ENCODE measurements at regions of chr13 and their contacts with region 1.

Region 1: GRCh38 chr13:25574437-25575411 is 202.9 kb downstream of the ATP8A2 start:
- DNase-seq: peak; percentile 76
- H3K4me3 ChIP-seq: no peak overlapping the region
- H3K27ac ChIP-seq: no peak overlapping the region
- H3K4me1 ChIP-seq: no peaks in the 10 kb centered on the region
- H3K27me3 ChIP-seq: no peaks in the 10 kb centered on the region
- CTCF ChIP-seq: peak; percentile 96

Region 2: DNA sequence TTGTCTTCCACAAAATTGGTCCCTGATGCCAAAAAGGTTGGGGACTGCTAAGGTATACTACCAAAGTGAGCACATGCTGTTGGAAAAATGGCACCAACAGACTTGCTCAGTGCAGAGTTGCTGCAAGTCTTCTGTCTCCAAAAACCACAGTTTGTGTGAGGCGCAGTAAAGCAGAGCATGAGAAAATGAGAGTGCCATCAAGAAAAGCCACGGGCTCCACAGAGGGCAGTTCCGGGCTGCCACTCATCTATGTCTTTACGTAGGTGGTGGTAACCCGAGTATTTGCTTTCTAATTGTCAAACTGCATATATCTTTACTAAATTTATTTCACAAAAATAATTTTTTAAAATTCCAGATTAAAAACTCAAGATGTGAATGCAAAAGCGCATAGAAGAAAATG is 687.0 kb before region 1 on chr13:
- CTCF ChIA-PET with region 1: no interaction called
- dilution Hi-C with region 1: no loop called
- in situ Hi-C with region 1: no loop called
- intact Hi-C with region 1: no loop called
- DNase-seq: no peak
- H3K4me3 ChIP-seq: no peak overlapping the region
- H3K27ac ChIP-seq: no peak overlapping the region
- H3K4me1 ChIP-seq: no peaks in the 10 kb centered on the region
- H3K27me3 ChIP-seq: no peaks in the 10 kb centered on the region
- CTCF ChIP-seq: no peak

Region 3: DNA sequence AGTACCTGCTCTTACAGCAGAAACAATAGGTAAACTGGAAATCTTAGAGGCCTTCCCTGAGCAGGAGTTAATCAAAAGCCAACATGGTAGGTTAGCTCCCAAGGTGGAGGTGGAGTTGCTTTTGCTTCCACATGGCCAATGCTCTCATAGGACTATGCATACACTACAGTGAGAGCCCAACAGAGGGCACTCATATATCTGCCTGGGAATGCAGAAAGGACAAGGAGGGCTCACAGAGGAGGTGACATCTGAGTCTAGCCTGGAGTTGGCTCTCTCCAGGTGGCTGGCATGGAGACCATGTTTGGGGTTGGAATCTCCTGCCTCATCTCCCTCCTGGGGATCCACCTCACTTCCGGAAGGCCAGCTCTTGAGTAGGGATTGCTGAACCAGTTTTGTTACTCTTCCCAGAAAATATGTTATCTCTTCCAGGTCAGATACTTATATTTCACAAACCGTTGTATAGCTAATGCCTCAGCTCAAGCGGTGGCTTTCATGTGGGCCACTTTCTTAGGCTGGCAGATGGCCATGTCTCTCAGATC is 168.3 kb before region 1 on chr13:
- CTCF ChIA-PET with region 1: no interaction called
- dilution Hi-C with region 1: no loop called
- in situ Hi-C with region 1: no loop called
- intact Hi-C with region 1: loop called (anchors 2 kb)
- DNase-seq: peak; percentile 8
- H3K4me3 ChIP-seq: no peak overlapping the region
- H3K27ac ChIP-seq: no peak overlapping the region
- H3K4me1 ChIP-seq: no peaks in the 10 kb centered on the region
- H3K27me3 ChIP-seq: no peaks in the 10 kb centered on the region
- CTCF ChIP-seq: peak; percentile 17 to 44

Region 4: DNA sequence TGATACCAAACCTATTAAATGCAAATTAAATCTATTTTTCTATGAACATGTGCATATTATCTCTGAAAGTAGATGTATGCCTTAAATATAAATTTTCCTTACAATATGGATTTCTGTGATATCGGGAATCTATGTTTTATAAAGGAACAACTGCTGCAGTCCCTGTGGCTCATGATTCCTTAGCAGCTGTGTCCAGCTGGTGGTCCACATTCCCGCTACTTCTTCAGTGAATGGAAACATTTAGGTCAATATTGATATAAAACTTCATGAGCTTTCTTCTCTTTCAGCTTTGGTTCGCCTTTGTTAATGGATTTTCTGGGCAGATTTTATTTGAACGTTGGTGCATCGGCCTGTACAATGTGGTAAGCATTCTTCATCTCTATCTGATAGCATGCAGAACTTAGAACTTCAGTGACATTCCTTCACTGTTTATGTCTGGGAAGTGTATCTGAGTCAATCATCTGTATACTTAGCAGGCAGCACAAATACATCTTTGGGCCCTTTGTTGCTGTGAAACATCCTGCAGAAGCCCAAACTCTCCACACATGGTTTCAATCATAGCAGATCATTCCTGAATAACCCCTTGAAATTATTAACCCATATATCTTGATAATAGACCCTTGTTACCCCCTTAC is 253.2 kb after region 1 on chr13:
- CTCF ChIA-PET with region 1: interaction called, 4 read pairs
- dilution Hi-C with region 1: no loop called
- in situ Hi-C with region 1: no loop called
- intact Hi-C with region 1: loop called (anchors 2 kb)
- DNase-seq: no peak
- H3K4me3 ChIP-seq: no peak overlapping the region
- H3K27ac ChIP-seq: no peak overlapping the region
- H3K4me1 ChIP-seq: no peaks in the 10 kb centered on the region
- H3K27me3 ChIP-seq: no peaks in the 10 kb centered on the region
- CTCF ChIP-seq: no peak

Region 5: GRCh38 chr13:25906191-25906661 is 331.5 kb after region 1 on chr13:
- CTCF ChIA-PET with region 1: no interaction called
- dilution Hi-C with region 1: no loop called
- in situ Hi-C with region 1: no loop called
- intact Hi-C with region 1: no loop called
- DNase-seq: no peak
- H3K4me3 ChIP-seq: no peak overlapping the region
- H3K27ac ChIP-seq: no peak overlapping the region
- H3K4me1 ChIP-seq: peaks cover 13% of the 10 kb centered on the region
- H3K27me3 ChIP-seq: no peaks in the 10 kb centered on the region
- CTCF ChIP-seq: no peak

Region 6: GRCh38 chr13:26062844-26063444 is 488.2 kb after region 1 on chr13:
- CTCF ChIA-PET with region 1: interaction called, 5 read pairs
- dilution Hi-C with region 1: no loop called
- in situ Hi-C with region 1: loop called (anchors 5 kb)
- intact Hi-C with region 1: loop called (anchors 1 kb)
- DNase-seq: peak; percentile 53
- H3K4me3 ChIP-seq: no peak overlapping the region
- H3K27ac ChIP-seq: no peak overlapping the region
- H3K4me1 ChIP-seq: no peaks in the 10 kb centered on the region
- H3K27me3 ChIP-seq: peaks cover 1% of the 10 kb centered on the region
- CTCF ChIP-seq: peak; percentile 85

Region 7: GRCh38 chr13:26074706-26075105 is 500.0 kb after region 1 on chr13:
- CTCF ChIA-PET with region 1: interaction called, 5 read pairs
- dilution Hi-C with region 1: no loop called
- in situ Hi-C with region 1: loop called in 1 of 2 experiments (anchors 5 kb)
- intact Hi-C with region 1: loop called (anchors 1 kb)
- DNase-seq: peak; percentile 31
- H3K4me3 ChIP-seq: peak overlapping the region in 2 of 3 experiments; percentile 15 to 21
- H3K27ac ChIP-seq: no peak overlapping the region
- H3K4me1 ChIP-seq: peaks cover 13% of the 10 kb centered on the region
- H3K27me3 ChIP-seq: no peaks in the 10 kb centered on the region
- CTCF ChIP-seq: peak in 1 of 2 donors; percentile 29

Region 8: DNA sequence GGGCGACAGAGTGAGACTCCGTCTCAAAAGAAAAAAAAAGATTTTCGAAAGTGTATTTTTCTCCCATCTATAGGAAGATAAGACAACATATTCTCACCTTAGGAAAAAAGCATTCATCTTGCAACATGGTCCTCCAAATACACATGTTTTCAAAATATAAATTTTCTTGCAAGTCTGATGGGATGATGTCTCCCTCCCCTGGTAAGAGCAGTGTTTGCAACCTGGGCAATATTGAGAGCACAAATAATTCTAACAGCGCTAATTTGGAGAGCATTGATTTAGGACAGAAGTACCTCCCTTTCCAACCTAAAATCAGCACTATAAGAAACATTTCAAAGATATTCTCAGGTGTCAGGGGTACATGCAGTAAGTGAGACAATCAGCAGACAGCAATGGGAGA is 538.1 kb after region 1 on chr13:
- CTCF ChIA-PET with region 1: no interaction called
- dilution Hi-C with region 1: no loop called
- in situ Hi-C with region 1: no loop called
- intact Hi-C with region 1: loop called (anchors 1 kb)
- DNase-seq: peak; percentile 1
- H3K4me3 ChIP-seq: no peak overlapping the region
- H3K27ac ChIP-seq: no peak overlapping the region
- H3K4me1 ChIP-seq: no peaks in the 10 kb centered on the region
- H3K27me3 ChIP-seq: no peaks in the 10 kb centered on the region
- CTCF ChIP-seq: peak; percentile 37 to 44

Region 9: GRCh38 chr13:26498656-26499591 is 924.2 kb after region 1 on chr13:
- CTCF ChIA-PET with region 1: no interaction called
- dilution Hi-C with region 1: no loop called
- in situ Hi-C with region 1: no loop called
- intact Hi-C with region 1: loop called (anchors 5 kb)
- DNase-seq: no peak
- H3K4me3 ChIP-seq: no peak overlapping the region
- H3K27ac ChIP-seq: no peak overlapping the region
- H3K4me1 ChIP-seq: peaks cover 21% of the 10 kb centered on the region
- H3K27me3 ChIP-seq: no peaks in the 10 kb centered on the region
- CTCF ChIP-seq: no peak